AG04450 (cell line): ENCODE measurements at regions of chr1 and their contacts with region 1.

Region 1: DNA sequence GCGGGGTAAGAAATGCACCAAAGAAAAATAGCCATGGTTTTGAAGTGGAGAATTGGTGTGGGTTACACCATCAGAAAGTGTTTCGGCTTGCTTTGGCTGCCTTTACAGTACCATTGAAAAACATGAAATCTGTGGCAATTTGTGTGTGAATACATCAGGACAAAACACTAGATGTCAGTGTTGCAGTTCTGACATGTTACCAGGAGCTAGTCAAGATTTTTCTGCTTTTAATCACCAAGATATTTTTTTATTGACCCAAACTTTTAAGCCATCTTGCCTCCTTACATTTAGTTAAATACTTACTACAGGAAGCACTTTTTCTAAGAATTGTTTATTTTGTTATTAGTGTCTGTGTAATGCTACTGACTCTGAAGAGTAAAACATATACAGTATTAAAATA is 14.3 kb downstream of the RRP15 start:
- DNase-seq: peak; percentile 51
- H3K4me3 ChIP-seq: no peak overlapping the region
- H3K27ac ChIP-seq: no peak overlapping the region
- H3K27me3 ChIP-seq: no peaks in the 10 kb centered on the region
- CTCF ChIP-seq: peak; percentile 72

Region 2: DNA sequence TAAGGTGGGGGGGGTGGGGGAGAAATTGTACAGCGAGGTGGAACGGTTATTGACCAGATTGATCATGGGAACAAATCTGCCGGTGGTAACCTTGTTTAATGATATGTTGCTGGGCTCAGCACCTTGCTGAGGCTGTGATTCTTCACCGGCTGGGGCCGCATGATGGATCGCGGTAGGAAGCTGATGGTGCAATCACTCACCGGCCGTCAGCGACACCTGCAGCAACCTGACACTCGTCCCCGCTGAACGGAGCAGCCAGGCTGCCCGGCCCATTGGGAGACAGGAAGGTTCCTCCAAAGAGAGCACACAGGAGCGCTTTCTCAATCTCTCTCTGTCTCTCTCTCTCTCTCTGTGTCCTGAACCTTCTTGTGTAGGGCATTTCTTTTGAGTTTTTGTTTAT is 142.8 kb before region 1 on chr1:
- CTCF ChIA-PET with region 1: no interaction called
- POLR2A ChIA-PET with region 1: no interaction called
- DNase-seq: no peak
- H3K4me3 ChIP-seq: no peak overlapping the region
- H3K27ac ChIP-seq: no peak overlapping the region
- H3K27me3 ChIP-seq: peaks cover 13% of the 10 kb centered on the region
- CTCF ChIP-seq: no peak

Region 3: GRCh38 chr1:218200979-218201378 is 98.4 kb before region 1 on chr1:
- CTCF ChIA-PET with region 1: no interaction called
- POLR2A ChIA-PET with region 1: no interaction called
- DNase-seq: no peak
- H3K4me3 ChIP-seq: no peak overlapping the region
- H3K27ac ChIP-seq: no peak overlapping the region
- H3K27me3 ChIP-seq: peaks cover 3% of the 10 kb centered on the region
- CTCF ChIP-seq: no peak

Region 4: DNA sequence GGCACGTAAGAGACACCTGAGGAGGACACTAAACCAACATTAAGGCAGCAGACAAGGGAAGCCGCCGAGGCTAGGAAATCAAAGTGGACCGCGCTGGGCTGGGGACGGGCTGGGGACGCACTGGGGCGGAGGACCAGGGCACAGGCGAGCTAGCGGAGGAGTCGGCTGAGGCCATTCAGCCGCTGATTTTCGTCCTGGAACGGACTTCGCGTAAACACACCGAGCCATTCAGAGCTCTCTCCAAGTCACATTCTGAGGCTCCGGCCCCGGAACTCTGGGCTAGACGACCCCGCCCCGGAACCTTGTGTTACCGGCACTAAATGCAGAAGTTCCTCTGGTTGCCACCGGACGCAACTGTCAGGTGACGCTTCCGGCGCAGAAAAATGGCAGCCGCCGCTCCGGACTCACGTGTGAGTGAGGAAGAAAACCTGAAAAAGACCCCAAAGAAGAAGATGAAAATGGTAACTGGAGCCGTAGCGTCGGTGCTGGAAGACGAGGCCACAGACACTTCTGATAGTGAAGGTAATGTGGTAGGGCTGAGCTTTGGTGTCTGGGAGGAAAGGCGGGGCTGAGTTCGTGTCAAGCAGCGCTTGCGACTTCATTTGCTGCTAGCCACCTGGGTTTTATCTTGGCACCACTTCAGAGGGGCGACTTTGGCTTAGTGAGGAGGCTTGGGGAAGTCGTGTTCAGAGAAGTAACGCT is 14.3 kb before region 1 on chr1 and contains the start of gene RRP15:
- CTCF ChIA-PET with region 1: interaction called, 23 read pairs
- POLR2A ChIA-PET with region 1: interaction called, 5 read pairs
- DNase-seq: peak; percentile 82
- H3K4me3 ChIP-seq: peak within 1 kb of the TSS; percentile 100
- H3K27ac ChIP-seq: peak within 1 kb of the TSS; percentile 75
- H3K27me3 ChIP-seq: peaks cover 4% of the 10 kb centered on the region
- CTCF ChIP-seq: no peak
- polyA plus RNA-seq, gene RRP15: 5.8 and 7.9 TPM in 2 replicates

Region 5: GRCh38 chr1:218312509-218312908 is 13.1 kb after region 1 on chr1:
- CTCF ChIA-PET with region 1: interaction called, 13 read pairs
- POLR2A ChIA-PET with region 1: interaction called, 3 read pairs
- DNase-seq: no peak
- H3K4me3 ChIP-seq: no peak overlapping the region
- H3K27ac ChIP-seq: no peak overlapping the region
- H3K27me3 ChIP-seq: no peaks in the 10 kb centered on the region
- CTCF ChIP-seq: no peak

Region 6: GRCh38 chr1:218439541-218440295 is 140.3 kb after region 1 on chr1:
- CTCF ChIA-PET with region 1: no interaction called
- POLR2A ChIA-PET with region 1: no interaction called
- DNase-seq: no peak
- H3K4me3 ChIP-seq: no peak overlapping the region
- H3K27ac ChIP-seq: no peak overlapping the region
- H3K27me3 ChIP-seq: no peaks in the 10 kb centered on the region
- CTCF ChIP-seq: no peak

Region 7: GRCh38 chr1:218633238-218633988 is 334.0 kb after region 1 on chr1:
- CTCF ChIA-PET with region 1: no interaction called
- POLR2A ChIA-PET with region 1: no interaction called
- DNase-seq: no peak
- H3K4me3 ChIP-seq: no peak overlapping the region
- H3K27ac ChIP-seq: no peak overlapping the region
- H3K27me3 ChIP-seq: no peaks in the 10 kb centered on the region
- CTCF ChIP-seq: no peak

Region 8: DNA sequence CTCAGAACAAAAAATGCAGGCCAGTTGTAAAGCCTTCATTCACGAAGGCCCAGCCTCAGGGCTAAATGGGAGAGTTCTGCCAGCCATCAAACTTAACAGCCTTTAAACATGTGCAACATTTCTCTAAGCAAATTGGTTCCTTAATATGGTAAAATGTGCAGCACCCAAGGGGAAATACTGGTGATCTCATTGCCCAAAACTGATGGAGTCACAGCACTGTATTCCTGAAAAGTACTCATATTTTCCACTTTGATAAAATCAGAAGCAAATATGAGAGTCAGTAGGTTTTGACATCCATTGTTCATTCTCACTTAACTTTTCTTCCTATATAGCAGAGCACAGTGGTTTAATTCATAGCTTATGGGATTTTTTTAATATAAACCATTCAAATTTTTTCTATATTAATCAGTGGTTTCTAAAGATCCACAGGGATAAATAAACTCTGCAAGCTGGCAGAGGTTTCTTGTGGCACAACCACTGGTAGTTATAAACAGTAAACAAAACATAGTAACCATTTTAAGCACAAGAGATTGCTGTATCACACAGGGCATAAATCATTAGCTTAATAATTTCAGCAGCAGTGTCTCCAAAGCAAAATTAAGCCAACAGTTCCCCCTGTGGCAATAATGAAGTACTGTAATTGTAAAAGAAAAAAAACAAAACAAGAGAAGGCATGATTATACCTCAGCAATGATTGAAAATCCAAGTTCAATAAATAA is 767.4 kb after region 1 on chr1:
- CTCF ChIA-PET with region 1: interaction called, 11 read pairs
- POLR2A ChIA-PET with region 1: no interaction called
- DNase-seq: no peak
- H3K4me3 ChIP-seq: no peak overlapping the region
- H3K27ac ChIP-seq: peak overlapping the region; percentile 54
- H3K27me3 ChIP-seq: no peaks in the 10 kb centered on the region
- CTCF ChIP-seq: peak; percentile 60

Region 9: GRCh38 chr1:219566951-219567947 is 1267.8 kb after region 1 on chr1:
- CTCF ChIA-PET with region 1: interaction called, 30 read pairs
- POLR2A ChIA-PET with region 1: no interaction called
- DNase-seq: no peak
- H3K4me3 ChIP-seq: no peak overlapping the region
- H3K27ac ChIP-seq: no peak overlapping the region
- H3K27me3 ChIP-seq: peaks cover 2% of the 10 kb centered on the region
- CTCF ChIP-seq: peak; percentile 73

Region 10: DNA sequence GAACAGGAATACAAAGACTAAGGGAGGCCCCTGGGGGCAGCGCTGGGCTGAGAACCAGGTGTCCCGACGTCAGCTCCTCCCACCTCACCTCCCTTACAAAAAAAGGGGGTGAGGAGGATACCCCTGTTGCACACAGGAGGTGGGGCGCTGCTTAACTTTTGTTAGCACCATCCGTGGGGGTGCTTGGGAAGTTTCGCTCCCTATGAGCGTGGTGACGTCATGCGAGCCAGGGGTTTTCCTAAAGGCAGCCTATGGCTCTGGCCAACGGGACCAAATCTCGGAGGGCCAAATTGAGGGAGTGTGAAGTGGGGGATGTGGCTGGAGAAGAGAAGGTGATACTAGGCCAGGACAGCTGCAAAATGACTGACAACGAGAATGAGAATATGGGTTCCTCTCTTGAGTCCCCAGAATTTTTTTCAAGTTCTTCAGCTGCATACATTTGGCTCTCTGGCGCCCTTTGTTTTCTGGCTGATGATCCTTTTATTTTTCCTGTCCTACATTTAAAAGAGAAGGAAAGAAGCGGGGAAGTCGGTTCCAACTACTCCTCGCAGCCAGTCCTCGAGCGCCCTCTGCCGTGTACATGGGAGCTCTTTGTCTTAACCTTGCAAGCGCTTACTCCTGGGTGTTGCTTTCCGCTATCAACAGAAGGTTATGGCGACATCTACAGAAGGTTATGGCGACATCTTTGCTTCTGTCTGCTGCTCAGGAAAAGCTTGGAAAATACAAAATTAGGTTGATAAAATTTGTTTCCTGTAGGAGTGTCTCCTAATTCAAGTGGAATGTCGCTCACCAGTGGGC is 1361.4 kb after region 1 on chr1:
- CTCF ChIA-PET with region 1: interaction called, 18 read pairs
- POLR2A ChIA-PET with region 1: no interaction called
- DNase-seq: peak; percentile 74
- H3K4me3 ChIP-seq: peak overlapping the region; percentile 20
- H3K27ac ChIP-seq: no peak overlapping the region
- H3K27me3 ChIP-seq: no peaks in the 10 kb centered on the region
- CTCF ChIP-seq: peak; percentile 94

Region 11: DNA sequence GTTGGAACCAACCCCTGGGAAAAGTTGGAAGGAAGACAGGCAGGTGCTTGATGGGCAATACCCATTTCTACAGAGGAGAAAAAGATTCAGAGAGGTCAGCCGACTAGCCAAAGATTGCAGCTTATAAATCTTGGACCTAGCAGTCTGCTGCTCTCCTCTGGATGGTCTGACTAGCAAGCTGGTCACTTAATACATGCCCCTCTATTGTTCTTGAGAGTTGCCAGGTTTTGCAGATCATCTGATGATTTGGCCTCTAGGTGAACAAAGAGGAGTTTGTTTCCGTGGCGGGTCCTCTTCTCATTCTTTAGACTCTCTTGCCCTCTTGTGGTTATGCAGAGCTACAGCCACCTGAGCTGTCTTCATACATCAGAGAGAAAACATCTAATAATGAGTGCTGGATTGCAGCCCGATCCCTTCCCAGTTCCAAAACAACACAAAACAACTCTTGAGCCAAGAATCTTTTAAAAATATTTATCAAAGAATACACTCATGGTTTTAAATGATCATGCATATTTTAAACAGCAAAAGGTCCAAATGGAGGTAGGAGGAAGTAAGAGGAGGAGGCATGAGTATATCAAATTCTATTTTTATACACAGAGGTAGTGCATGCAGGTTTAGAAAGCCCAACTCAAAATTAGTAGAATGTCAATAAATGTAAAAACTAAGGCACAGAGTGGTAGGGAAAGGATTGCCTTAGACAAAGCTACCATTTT is 1513.2 kb after region 1 on chr1:
- CTCF ChIA-PET with region 1: interaction called, 14 read pairs
- POLR2A ChIA-PET with region 1: no interaction called
- DNase-seq: peak; percentile 54
- H3K4me3 ChIP-seq: no peak overlapping the region
- H3K27ac ChIP-seq: no peak overlapping the region
- H3K27me3 ChIP-seq: peaks cover 23% of the 10 kb centered on the region
- CTCF ChIP-seq: peak; percentile 95